ENCODE measurements at regions of chr15 and their contacts with region 1.

Region 1: GRCh38 chr15:44728576-44729407 is 7.5 kb upstream of the TRIM69 start:
- DNase-seq: peak; percentile 94 to 97 (median 96)
- ATAC-seq: peak; percentile 96 to 98 (median 96)
- H3K4me3 ChIP-seq: peak overlapping the region; percentile 66 to 92 (median 82)
- H3K27ac ChIP-seq: peak overlapping the region; percentile 94 to 100 (median 99)
- H3K4me1 ChIP-seq: peaks cover 3 to 81% (median 43%) of the 10 kb centered on the region in 12 donors
- H3K27me3 ChIP-seq: no peaks in the 10 kb centered on the region
- CTCF ChIP-seq: no peak
- POLR2A ChIP-seq: peak in 1 of 2 donors; percentile 85

Region 2: DNA sequence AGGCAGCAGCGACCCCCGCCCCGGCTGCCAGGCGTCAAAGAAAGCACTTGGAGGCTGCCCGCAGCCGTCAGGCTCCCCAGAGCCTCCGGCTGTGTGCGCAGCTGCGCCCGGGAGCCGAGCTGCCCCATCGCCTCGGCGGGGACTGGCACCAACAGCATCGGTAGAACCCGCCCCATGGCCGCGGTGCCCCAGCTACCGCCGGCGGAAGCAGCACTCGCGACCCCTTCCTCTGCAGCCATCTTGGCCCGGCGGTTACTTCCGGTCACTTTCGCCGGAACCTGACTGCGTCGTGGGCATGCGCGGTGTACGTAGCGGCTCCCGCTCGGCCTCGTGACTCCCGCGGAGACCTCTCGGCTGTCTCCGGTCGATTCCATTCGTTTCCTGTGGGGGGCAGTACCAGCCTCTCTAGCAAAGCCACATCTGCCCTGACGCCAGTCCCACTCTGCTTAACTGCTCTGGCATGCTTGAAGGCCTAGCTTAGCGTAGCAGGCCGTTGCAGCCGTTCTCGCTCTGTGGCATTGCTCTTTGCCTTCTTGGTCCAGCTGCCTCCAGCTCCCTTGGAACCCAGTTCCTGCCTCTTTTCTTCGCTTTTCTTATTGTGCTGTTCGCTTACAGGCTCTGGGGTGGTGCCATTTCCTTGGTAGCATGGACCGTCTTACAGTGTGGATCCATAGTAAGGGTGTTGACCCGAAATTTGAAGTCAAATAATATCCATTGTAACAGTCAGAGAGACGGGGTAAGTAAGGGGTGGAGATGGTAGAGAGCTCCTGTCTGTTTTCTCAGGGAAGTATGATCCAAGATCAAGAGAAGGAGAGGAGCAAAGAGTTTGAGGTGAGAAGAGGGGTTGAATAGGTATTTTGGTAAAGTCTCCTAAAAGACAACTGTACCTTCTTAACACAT is 65.1 kb before region 1 on chr15 and contains the start of gene SPG11:
- intact Hi-C with region 1: loop called in 5 of 10 experiments (anchors 1 to 2 kb)
- DNase-seq: peak; percentile 98 to 99 (median 99)
- ATAC-seq: peak; percentile 98 to 99 (median 98)
- H3K4me3 ChIP-seq: peak within 1 kb of the TSS; percentile 69 to 99 (median 93)
- H3K27ac ChIP-seq: peak within 1 kb of the TSS; percentile 91 to 99 (median 97)
- H3K4me1 ChIP-seq: peaks cover 0 to 49% (median 15%) of the 10 kb centered on the region in 12 donors
- H3K27me3 ChIP-seq: no peaks in the 10 kb centered on the region
- CTCF ChIP-seq: peak; percentile 92 to 98 (median 96)
- POLR2A ChIP-seq: peak in 1 of 2 donors; percentile 88
- total RNA-seq, gene SPG11: 35.4 to 69.4 (median 48.8) TPM